ENCODE measurements at regions of chr5 and their contacts with region 1.

Region 1: GRCh38 chr5:43040287-43041098 is at the start of gene ANXA2R:
- DNase-seq: peak; percentile 87 to 90 (median 89)
- ATAC-seq: peak; percentile 59 to 70 (median 68)
- H3K4me3 ChIP-seq: peak within 1 kb of the TSS; percentile 28 to 77 (median 66)
- H3K27ac ChIP-seq: peak within 1 kb of the TSS; percentile 89 to 99 (median 95)
- H3K4me1 ChIP-seq: peaks cover 0 to 42% (median 7%) of the 10 kb centered on the region in 12 donors
- H3K27me3 ChIP-seq: peaks cover 0 to 80% (median 16%) of the 10 kb centered on the region in 9 donors
- CTCF ChIP-seq: peak; percentile 71 to 86 (median 80)
- POLR2A ChIP-seq: no peak
- total RNA-seq, gene ANXA2R: 0.49 to 2.4 (median 1.4) TPM

Region 2: DNA sequence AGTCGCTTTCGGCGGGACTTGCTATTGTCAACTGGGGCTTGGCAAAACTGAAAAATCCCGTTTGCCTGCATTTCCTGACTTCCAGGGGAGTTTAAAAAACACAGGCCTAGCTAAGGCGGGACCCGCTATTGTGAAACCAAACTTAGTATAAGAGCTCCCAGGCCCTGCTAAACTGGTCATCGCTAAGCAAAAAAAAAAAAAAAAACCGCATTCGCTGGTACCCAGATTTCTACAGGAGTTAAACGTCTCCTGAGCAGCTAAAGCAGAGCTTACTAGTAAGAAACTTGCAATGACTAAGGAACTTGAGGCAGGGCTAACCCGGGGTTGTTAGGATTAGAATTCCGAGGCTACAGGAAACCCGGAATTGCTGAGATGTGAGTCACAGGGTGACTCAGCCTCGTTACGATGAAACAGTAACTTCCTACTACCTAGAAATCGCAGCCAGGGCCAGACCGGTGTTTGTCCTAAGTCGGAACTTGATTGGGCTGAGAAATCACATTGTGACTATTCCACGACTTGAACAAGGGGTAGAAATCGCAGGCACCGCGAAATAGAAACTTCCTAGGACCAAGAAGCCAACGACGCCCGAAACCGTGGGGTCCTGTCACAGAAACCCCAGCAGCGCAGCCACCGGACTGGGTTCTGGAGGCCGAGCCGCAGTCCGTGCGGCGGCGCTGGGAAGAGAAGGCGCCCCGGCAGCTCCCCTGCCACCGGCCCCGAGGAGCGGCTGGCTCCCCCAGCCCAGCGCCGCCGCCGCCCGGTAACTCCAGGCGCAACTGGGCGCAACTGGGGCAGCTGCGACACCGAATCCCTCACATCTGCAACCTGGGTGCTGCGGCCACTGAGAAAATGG is 89.8 kb before region 1 on chr5:
- intact Hi-C with region 1: loop called in 6 of 10 experiments (anchors 2 to 10 kb)
- DNase-seq: peak in 4 of 5 donors; percentile 69 to 79 (median 75)
- ATAC-seq: peak; percentile 69 to 92 (median 90)
- H3K4me3 ChIP-seq: peak overlapping the region; percentile 8 to 64 (median 57)
- H3K27ac ChIP-seq: peak overlapping the region; percentile 71 to 96 (median 92)
- H3K4me1 ChIP-seq: peaks cover 0 to 43% (median 18%) of the 10 kb centered on the region in 12 donors
- H3K27me3 ChIP-seq: peaks cover 9 to 100% (median 65%) of the 10 kb centered on the region in 9 donors
- CTCF ChIP-seq: peak in 1 of 12 donors; percentile 7
- POLR2A ChIP-seq: no peak

Region 3: GRCh38 chr5:43008369-43009153 is 31.9 kb before region 1 on chr5:
- intact Hi-C with region 1: loop called in 6 of 10 experiments (anchors 5 kb)
- DNase-seq: peak; percentile 87 to 93 (median 89)
- ATAC-seq: peak; percentile 83 to 90 (median 88)
- H3K4me3 ChIP-seq: peak overlapping the region; percentile 22 to 71 (median 56)
- H3K27ac ChIP-seq: peak overlapping the region; percentile 68 to 98 (median 92)
- H3K4me1 ChIP-seq: peaks cover 0 to 27% (median 4%) of the 10 kb centered on the region in 12 donors
- H3K27me3 ChIP-seq: peaks cover 0 to 75% (median 32%) of the 10 kb centered on the region in 9 donors
- CTCF ChIP-seq: peak in 2 of 12 donors; percentile 5 to 15
- POLR2A ChIP-seq: peak in 1 of 2 donors; percentile 17

Region 4: DNA sequence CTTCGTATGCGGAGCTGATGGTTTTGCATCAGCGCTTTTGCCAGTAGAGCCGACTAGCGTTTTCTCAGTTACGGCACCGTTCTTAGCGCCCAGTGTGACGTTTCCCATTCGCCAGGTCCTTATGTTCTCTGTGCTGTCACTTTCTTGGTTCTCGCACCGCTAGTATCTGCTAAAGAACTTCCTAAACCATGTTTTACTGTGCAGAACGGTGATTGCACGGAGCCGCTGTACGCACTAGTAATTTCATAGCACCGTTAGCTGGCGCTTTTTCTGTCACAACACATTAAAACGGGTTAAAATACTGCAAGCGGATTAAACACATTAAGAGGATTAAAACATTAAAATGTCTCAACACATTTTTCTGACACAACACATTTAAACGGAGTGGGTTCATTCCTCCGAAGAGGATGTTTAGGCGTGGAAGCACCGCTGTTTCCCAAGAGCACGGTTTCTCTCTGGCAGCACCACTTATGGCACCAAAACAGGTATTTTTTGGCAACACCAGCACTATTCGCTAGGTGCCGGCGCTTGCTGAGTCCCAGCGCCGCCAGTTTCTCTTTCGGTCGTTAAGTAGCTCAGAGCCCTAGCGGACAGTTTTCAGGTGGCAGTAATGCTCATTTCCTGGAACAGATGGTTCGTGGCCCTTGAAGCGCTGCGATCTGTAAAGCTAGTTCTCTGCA is 20.7 kb before region 1 on chr5:
- intact Hi-C with region 1: loop called in 5 of 10 experiments (anchors 1 to 2 kb)
- DNase-seq: peak in 4 of 5 donors; percentile 64 to 74 (median 70)
- ATAC-seq: peak in 3 of 4 donors; percentile 45 to 51 (median 51)
- H3K4me3 ChIP-seq: peak overlapping the region; percentile 42 to 73 (median 63)
- H3K27ac ChIP-seq: peak overlapping the region; percentile 75 to 99 (median 94)
- H3K4me1 ChIP-seq: peaks cover 0 to 44% (median 9%) of the 10 kb centered on the region in 12 donors
- H3K27me3 ChIP-seq: peaks cover 0 to 94% (median 23%) of the 10 kb centered on the region in 9 donors
- CTCF ChIP-seq: peak; percentile 11 to 55 (median 36)
- POLR2A ChIP-seq: no peak

Measured in heart left ventricle (tissue), 16 donors.